GM12878 (cell line): ENCODE measurements at regions of chr17 and their contacts with region 1.

Region 1: GRCh38 chr17:52235516-52235915 is 77.0 kb upstream of the CA10 start:
- DNase-seq: no peak
- ATAC-seq: no peak
- H3K4me3 ChIP-seq: no peak overlapping the region
- H3K27ac ChIP-seq: no peak overlapping the region
- H3K4me1 ChIP-seq: no peaks in the 10 kb centered on the region
- H3K27me3 ChIP-seq: no peaks in the 10 kb centered on the region
- CTCF ChIP-seq: no peak
- EP300 ChIP-seq: no peak
- POLR2A ChIP-seq: no peak
- RAD21 ChIP-seq: no peak

Region 2: DNA sequence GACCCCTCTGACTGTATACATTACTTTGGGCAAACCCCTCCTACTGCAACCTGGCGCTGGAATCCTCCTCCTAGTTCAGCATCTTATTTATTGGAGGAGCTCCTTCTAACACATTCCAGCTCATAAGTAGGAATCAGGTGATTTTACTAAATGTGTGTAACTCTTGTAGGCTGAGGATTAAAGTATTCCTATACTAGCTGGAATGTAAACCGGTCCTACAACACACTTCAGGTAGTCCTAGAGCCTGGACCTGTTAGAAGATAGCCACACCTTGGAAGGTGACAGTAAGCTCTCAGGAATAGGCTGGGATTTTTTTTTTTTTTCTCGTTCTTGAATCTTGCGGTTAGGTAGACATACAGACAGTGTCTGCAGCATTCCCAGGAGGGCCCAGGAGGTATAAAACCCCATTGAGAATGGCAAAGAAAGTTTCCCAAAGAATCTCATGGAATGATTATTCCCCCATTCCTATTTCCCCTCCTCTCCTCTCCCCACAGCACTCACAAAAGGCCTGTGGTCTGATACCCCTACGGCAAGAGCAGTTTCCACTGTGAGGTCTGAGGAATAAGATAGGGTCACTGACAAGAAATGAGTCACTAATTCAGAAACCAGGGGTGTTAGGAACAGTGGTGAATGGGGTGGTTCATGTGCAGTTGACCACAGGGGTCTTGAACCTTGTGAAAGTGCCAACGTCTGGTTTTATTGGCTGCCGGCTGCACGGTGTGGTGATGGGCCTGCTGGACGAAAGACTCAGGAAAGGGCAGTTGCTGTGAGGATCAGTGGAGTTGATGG is 708.1 kb before region 1 on chr17:
- CTCF ChIA-PET with region 1: no interaction called
- POLR2A ChIA-PET with region 1: no interaction called
- RAD21 ChIA-PET with region 1: no interaction called
- SMC1A ChIA-PET with region 1: no interaction called
- in situ Hi-C with region 1: no loop called
- intact Hi-C with region 1: no loop called
- DNase-seq: no peak
- ATAC-seq: no peak
- H3K4me3 ChIP-seq: no peak overlapping the region
- H3K27ac ChIP-seq: no peak overlapping the region
- H3K4me1 ChIP-seq: no peaks in the 10 kb centered on the region
- H3K27me3 ChIP-seq: no peaks in the 10 kb centered on the region; a peak in 1 of 4 replicates
- CTCF ChIP-seq: no peak
- EP300 ChIP-seq: no peak
- POLR2A ChIP-seq: no peak
- RAD21 ChIP-seq: no peak

Region 3: DNA sequence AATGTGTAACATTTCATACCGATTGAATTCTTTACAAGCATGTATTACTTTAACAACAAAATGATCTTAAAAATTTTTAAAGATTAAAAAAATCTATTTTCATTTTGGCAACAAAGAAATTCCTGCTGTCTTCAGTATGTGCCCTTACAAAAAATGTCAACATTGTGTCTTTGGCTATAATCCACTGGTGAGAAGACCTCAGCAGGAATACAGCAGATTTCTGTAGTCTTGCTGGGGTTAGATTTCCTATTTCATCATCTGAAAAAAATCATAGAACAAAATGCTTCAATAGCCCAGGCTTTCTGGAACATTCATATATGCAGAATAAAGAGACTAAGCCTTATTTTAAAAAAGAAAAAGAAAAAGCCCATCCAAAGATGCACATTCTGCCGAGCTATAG is 52.1 kb after region 1 on chr17:
- CTCF ChIA-PET with region 1: no interaction called
- POLR2A ChIA-PET with region 1: no interaction called
- RAD21 ChIA-PET with region 1: no interaction called
- SMC1A ChIA-PET with region 1: no interaction called
- in situ Hi-C with region 1: loop called (anchors 5 kb)
- intact Hi-C with region 1: no loop called
- DNase-seq: no peak
- ATAC-seq: no peak
- H3K4me3 ChIP-seq: no peak overlapping the region
- H3K27ac ChIP-seq: no peak overlapping the region
- H3K4me1 ChIP-seq: no peaks in the 10 kb centered on the region
- H3K27me3 ChIP-seq: no peaks in the 10 kb centered on the region
- CTCF ChIP-seq: no peak
- EP300 ChIP-seq: no peak
- POLR2A ChIP-seq: no peak
- RAD21 ChIP-seq: no peak

Region 4: DNA sequence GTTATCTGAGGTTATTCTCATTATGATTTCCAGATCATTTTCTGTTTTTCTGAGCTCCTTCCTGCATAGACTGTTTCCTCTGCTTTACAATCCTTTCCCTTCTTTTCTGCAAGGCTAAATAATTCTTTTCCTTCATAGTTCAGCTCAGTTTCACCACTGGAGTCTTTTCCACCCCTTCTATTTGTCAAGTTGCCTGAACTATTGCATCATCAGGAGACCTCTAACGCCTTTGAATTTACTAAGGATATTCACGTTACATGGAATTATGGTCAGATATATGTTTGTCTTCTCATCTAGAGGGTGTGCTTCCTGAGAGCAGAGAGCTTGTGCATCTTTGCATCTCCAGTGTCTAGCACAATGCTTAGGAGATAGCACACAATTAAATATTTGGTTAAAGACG is 63.4 kb after region 1 on chr17:
- CTCF ChIA-PET with region 1: no interaction called
- POLR2A ChIA-PET with region 1: no interaction called
- RAD21 ChIA-PET with region 1: no interaction called
- SMC1A ChIA-PET with region 1: no interaction called
- in situ Hi-C with region 1: no loop called
- intact Hi-C with region 1: no loop called
- DNase-seq: no peak
- ATAC-seq: no peak
- H3K4me3 ChIP-seq: no peak overlapping the region
- H3K27ac ChIP-seq: no peak overlapping the region
- H3K4me1 ChIP-seq: no peaks in the 10 kb centered on the region
- H3K27me3 ChIP-seq: no peaks in the 10 kb centered on the region
- CTCF ChIP-seq: no peak
- EP300 ChIP-seq: no peak
- POLR2A ChIP-seq: no peak
- RAD21 ChIP-seq: no peak